Activated CD8-positive, alpha-beta T cell treated with anti-CD3 and anti-CD28 coated beads, Interleukin-2, amount 10 ng/mL, durations not matched to agents 7 days and 5 days (primary cell): ENCODE measurements at regions of chr6 and their contacts with region 1.

Region 1: GRCh38 chr6:150891888-150892485 is 26.5 kb downstream of the MTHFD1L start:
- DNase-seq: peak; percentile 70
- ATAC-seq: peak; percentile 75
- H3K4me3 Mint-ChIP-seq: no peak overlapping the region
- H3K27ac Mint-ChIP-seq: no peak overlapping the region
- H3K4me1 Mint-ChIP-seq: peaks cover 28% of the 10 kb centered on the region
- H3K27me3 Mint-ChIP-seq: no peaks in the 10 kb centered on the region

Region 2: GRCh38 chr6:150813319-150813992 is 78.5 kb before region 1 on chr6:
- CTCF ChIA-PET with region 1: interaction called, 12 read pairs
- POLR2A ChIA-PET with region 1: no interaction called
- DNase-seq: no peak
- ATAC-seq: no peak
- H3K4me3 Mint-ChIP-seq: no peak overlapping the region
- H3K27ac Mint-ChIP-seq: no peak overlapping the region
- H3K4me1 Mint-ChIP-seq: peaks cover 6% of the 10 kb centered on the region
- H3K27me3 Mint-ChIP-seq: peaks cover 10% of the 10 kb centered on the region

Region 3: DNA sequence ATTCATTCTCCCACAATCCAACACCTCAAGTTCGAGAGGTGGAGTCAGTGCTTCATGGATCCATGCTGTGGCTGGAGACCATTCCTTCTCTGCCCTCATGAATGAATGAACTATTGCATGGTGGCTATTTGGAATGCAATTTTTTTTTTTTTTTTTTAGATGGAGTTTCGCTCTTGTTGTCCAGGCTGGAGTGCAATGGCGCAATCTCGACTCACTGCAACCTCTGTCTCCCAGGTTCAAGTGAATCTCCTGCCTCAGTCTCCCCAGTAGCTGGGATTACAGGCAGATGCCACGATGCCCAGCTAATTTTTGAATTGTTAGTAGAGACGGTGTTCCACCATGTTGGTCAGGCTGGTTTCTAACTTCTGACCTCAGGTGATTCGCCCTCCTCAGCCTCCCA is 33.3 kb before region 1 on chr6:
- CTCF ChIA-PET with region 1: no interaction called
- POLR2A ChIA-PET with region 1: no interaction called
- DNase-seq: no peak
- ATAC-seq: no peak
- H3K4me3 Mint-ChIP-seq: no peak overlapping the region
- H3K27ac Mint-ChIP-seq: no peak overlapping the region
- H3K4me1 Mint-ChIP-seq: peaks cover 29% of the 10 kb centered on the region
- H3K27me3 Mint-ChIP-seq: peaks cover 27% of the 10 kb centered on the region

Region 4: GRCh38 chr6:150905769-150906506 is 14.0 kb after region 1 on chr6:
- CTCF ChIA-PET with region 1: interaction called, 30 read pairs
- POLR2A ChIA-PET with region 1: no interaction called
- DNase-seq: no peak
- ATAC-seq: no peak
- H3K4me3 Mint-ChIP-seq: no peak overlapping the region
- H3K27ac Mint-ChIP-seq: no peak overlapping the region
- H3K4me1 Mint-ChIP-seq: peaks cover 3% of the 10 kb centered on the region
- H3K27me3 Mint-ChIP-seq: no peaks in the 10 kb centered on the region

Region 5: GRCh38 chr6:151004415-151005024 is 112.5 kb after region 1 on chr6:
- CTCF ChIA-PET with region 1: interaction called, 17 read pairs
- POLR2A ChIA-PET with region 1: no interaction called
- DNase-seq: no peak
- ATAC-seq: no peak
- H3K4me3 Mint-ChIP-seq: no peak overlapping the region
- H3K27ac Mint-ChIP-seq: peak overlapping the region; percentile 71
- H3K4me1 Mint-ChIP-seq: peaks cover 26% of the 10 kb centered on the region
- H3K27me3 Mint-ChIP-seq: no peaks in the 10 kb centered on the region

Region 6: DNA sequence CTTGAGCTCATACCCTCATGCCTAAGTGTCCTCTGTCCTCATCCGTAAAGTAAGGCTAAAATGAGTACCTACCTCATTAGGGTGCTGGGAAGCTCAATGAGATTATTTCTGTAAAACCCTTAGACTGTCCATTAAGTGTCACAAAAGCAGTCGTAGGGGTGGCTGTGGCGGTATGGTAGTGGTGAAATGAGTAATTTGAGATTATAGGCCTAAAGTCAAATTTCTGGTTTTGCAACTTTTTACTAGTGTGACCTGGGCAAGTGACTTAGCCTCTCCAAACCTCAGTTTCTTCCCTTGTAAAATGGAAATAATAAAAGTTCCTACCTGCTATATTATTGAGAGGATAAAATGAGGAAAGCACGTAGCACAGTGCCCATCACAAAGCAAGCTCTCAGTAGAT is 199.6 kb after region 1 on chr6:
- CTCF ChIA-PET with region 1: no interaction called
- POLR2A ChIA-PET with region 1: no interaction called
- DNase-seq: no peak
- ATAC-seq: no peak
- H3K4me3 Mint-ChIP-seq: no peak overlapping the region
- H3K27ac Mint-ChIP-seq: no peak overlapping the region
- H3K4me1 Mint-ChIP-seq: no peaks in the 10 kb centered on the region
- H3K27me3 Mint-ChIP-seq: no peaks in the 10 kb centered on the region

Region 7: DNA sequence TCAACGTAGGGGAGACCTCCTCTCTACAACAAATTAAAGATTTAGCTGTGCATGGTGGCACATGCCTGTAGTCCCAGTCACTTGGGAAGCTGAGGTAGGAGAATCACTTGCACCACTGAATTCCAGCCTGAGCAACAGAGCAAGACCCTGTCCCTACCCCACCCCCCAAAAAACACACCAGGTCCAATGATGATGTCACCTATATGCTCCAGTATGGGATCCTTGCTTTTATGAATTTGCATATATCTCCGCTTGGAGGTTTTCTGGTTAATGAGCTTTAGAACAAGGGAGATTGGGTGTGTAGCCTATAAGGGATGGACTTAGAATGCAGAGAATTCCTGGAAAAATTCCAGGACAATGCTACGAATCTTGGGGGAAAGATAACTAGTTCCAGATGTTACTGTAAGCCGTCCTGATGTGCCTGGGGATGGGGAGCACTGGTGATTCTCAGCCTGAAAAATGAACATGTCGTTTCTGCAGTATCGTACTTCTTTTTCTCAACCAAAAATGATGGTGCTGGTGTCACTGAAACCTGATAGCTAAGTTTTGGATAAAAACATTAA is 438.2 kb after region 1 on chr6:
- CTCF ChIA-PET with region 1: interaction called, 326 read pairs
- POLR2A ChIA-PET with region 1: no interaction called
- DNase-seq: no peak
- ATAC-seq: no peak
- H3K4me3 Mint-ChIP-seq: no peak overlapping the region
- H3K27ac Mint-ChIP-seq: no peak overlapping the region
- H3K4me1 Mint-ChIP-seq: peaks cover 10% of the 10 kb centered on the region
- H3K27me3 Mint-ChIP-seq: peaks cover 26% of the 10 kb centered on the region